IMR-90 (cell line): ENCODE measurements at regions of chr1 and their contacts with region 1.

Region 1: DNA sequence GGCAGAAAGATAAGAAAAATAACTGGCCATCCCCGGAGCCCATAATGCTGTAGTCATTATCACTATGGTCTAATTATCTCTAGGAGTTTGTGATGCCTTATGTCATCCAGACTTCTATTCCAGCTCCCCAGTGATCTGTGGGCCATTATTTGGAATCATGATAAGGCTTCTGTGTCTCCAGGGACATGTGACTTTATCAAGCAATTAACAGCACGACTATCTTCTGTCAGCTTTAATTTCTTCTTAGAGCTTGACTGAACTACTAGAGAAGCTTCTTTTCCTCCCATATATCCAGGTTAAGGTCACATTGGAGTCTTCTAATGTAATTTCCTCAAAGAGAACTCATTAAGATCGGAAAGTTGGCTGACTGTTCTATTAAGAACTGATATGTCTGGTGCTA is 100.4 kb downstream of the LHX8 start:
- DNase-seq: no peak
- ATAC-seq: no peak
- H3K4me3 ChIP-seq: no peak overlapping the region
- H3K27ac ChIP-seq: no peak overlapping the region
- H3K4me1 ChIP-seq: no peaks in the 10 kb centered on the region
- H3K27me3 ChIP-seq: no peaks in the 10 kb centered on the region
- CTCF ChIP-seq: no peak
- POLR2A ChIP-seq: no peak
- RAD21 ChIP-seq: no peak

Region 2: GRCh38 chr1:75632350-75632949 is 397.9 kb after region 1 on chr1:
- CTCF ChIA-PET with region 1: no interaction called
- POLR2A ChIA-PET with region 1: no interaction called
- dilution Hi-C with region 1: no loop called
- in situ Hi-C with region 1: no loop called
- intact Hi-C with region 1: loop called (anchors 1 kb)
- DNase-seq: peak; percentile 23
- ATAC-seq: peak; percentile 86
- H3K4me3 ChIP-seq: no peak overlapping the region
- H3K27ac ChIP-seq: no peak overlapping the region
- H3K4me1 ChIP-seq: no peaks in the 10 kb centered on the region
- H3K27me3 ChIP-seq: no peaks in the 10 kb centered on the region
- CTCF ChIP-seq: peak; percentile 69
- POLR2A ChIP-seq: no peak
- RAD21 ChIP-seq: peak; percentile 67